Right cardiac atrium (tissue), 5 donors: ENCODE measurements at regions of chr3 and their contacts with region 1.

Region 1: GRCh38 chr3:135965506-135966270 is at the start of gene PPP2R3A:
- DNase-seq: peak; percentile 88 to 94 (median 92)
- ATAC-seq: peak; percentile 98 to 99
- H3K4me3 ChIP-seq: peak within 1 kb of the TSS; percentile 75
- H3K27ac ChIP-seq: peak within 1 kb of the TSS; percentile 66
- H3K4me1 ChIP-seq: no peaks in the 10 kb centered on the region
- H3K27me3 ChIP-seq: no peaks in the 10 kb centered on the region
- total RNA-seq, gene PPP2R3A: 40.9 to 89.6 (median 68.3) TPM

Region 2: DNA sequence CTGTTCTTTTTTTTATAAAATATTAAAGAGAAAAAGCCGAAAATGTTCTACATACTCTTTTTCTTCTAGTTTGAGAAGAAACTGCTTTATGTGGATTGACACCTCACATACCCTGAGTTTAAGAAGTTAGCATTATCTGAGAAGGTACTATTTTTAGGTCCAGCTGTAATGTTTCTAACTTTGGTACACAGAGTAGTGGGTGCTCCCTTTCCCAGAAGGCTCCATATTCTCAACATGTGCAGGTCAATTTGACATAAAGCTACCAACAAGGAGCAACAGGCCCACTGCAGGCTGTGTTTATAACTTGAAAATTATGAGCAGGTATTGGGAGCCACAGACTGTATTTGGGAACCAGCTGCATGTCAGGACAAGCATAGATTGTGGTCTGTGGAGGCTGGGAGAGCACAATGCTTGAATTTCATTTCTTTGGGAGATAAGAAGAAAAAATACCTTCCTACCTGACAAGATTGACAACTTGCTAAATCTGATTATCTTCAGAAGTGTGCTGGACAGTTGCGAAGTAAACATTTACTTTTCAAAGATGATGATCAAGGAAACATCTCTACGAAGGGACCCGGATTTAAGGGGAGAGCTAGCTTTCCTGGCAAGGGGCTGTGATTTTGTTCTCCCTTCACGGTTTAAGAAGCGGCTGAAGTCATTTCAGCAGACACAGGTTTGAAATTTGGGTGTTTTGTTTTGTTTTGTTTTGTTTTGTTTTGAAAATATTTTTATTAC is 57.0 kb after region 1 on chr3:
- intact Hi-C with region 1: loop called in 2 of 4 experiments (anchors 10 kb)
- DNase-seq: no peak
- ATAC-seq: peak; percentile 62 to 76
- H3K4me3 ChIP-seq: peak overlapping the region; percentile 84
- H3K27ac ChIP-seq: peak overlapping the region; percentile 92
- H3K4me1 ChIP-seq: peaks cover 4% of the 10 kb centered on the region
- H3K27me3 ChIP-seq: no peaks in the 10 kb centered on the region